Astrocyte of the cerebellum (primary cell): ENCODE measurements at regions of chr1 and their contacts with region 1.

Region 1: DNA sequence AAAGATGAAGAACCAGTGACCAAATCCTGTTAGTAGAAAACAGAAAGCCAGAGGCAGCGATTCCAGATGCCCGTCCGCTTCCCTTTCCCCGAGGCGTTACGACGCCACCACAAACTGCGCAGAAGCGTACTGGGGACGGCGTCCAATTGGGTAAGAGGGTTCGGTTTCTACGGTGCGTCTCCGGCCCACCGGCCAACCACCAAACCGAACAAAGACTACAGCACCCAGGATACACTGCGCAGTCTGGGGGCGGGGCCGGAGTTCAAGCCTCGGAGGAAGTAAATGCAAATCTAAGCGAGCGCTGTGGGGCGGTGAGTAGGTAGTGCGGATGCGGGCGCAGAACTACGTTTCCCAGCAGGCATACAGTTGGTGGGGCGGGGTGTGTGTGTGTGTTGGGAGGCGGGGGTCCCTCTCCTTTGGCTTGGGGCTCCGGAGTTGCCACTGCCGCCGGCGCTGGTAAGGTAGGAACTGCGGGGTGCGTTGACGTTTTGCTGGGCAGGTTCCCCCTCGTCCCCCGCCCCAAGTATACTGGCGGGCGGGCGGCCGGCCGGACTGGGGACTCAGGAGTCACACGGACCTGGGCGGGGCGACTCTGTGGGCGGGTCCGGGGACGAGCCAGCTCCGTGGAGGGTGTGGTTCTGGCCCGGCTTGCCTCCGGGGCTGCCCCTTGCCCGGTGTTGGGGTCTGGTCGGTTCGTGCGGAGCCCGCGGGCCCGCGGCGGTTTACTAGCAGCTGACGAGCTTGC is at the starts of genes SWT1 and TRMT1L:
- DNase-seq: peak; percentile 98
- H3K4me3 ChIP-seq: peak within 1 kb of the TSS; percentile 85
- CTCF ChIP-seq: no peak

Region 2: GRCh38 chr1:185681034-185681633 is 524.1 kb after region 1 on chr1:
- in situ Hi-C with region 1: loop called (anchors 25 kb)
- DNase-seq: peak; percentile 29
- H3K4me3 ChIP-seq: no peak overlapping the region
- CTCF ChIP-seq: peak; percentile 67